Gastrocnemius medialis (tissue), 4 donors: ENCODE measurements at regions of chr10 and their contacts with region 1.

Region 1: GRCh38 chr10:103772096-103772845 is 83.1 kb downstream of the SH3PXD2A start:
- DNase-seq: peak; percentile 76 to 88
- ATAC-seq: peak; percentile 70 to 80
- H3K4me3 ChIP-seq: peak overlapping the region; percentile 31 to 56 (median 54)
- H3K27ac ChIP-seq: peak overlapping the region; percentile 83 to 91 (median 86)
- H3K4me1 ChIP-seq: peaks cover under 1 to 19% of the 10 kb centered on the region in 2 donors
- H3K27me3 ChIP-seq: no peaks in the 10 kb centered on the region
- CTCF ChIP-seq: no peak
- POLR2A ChIP-seq: peak; percentile 53 to 74

Region 2: GRCh38 chr10:102583435-102584417 is 1188.5 kb before region 1 on chr10:
- in situ Hi-C with region 1: no loop called
- intact Hi-C with region 1: no loop called
- DNase-seq: peak; percentile 69 to 80
- ATAC-seq: peak; percentile 91 to 96
- H3K4me3 ChIP-seq: no peak overlapping the region
- H3K27ac ChIP-seq: no peak overlapping the region
- H3K4me1 ChIP-seq: peaks cover 3 to 22% of the 10 kb centered on the region in 2 donors
- H3K27me3 ChIP-seq: no peaks in the 10 kb centered on the region
- CTCF ChIP-seq: peak; percentile 85 to 89 (median 87)
- POLR2A ChIP-seq: no peak

Region 3: GRCh38 chr10:103745341-103746227 is 26.7 kb before region 1 on chr10:
- in situ Hi-C with region 1: no loop called
- intact Hi-C with region 1: loop called (anchors 2 kb)
- DNase-seq: peak in 1 of 2 donors; percentile 48
- ATAC-seq: peak; percentile 98
- H3K4me3 ChIP-seq: no peak overlapping the region
- H3K27ac ChIP-seq: peak overlapping the region; percentile 78 to 87 (median 82)
- H3K4me1 ChIP-seq: peaks cover 22 to 28% of the 10 kb centered on the region in 2 donors
- H3K27me3 ChIP-seq: no peaks in the 10 kb centered on the region
- CTCF ChIP-seq: no peak
- POLR2A ChIP-seq: no peak

Region 4: DNA sequence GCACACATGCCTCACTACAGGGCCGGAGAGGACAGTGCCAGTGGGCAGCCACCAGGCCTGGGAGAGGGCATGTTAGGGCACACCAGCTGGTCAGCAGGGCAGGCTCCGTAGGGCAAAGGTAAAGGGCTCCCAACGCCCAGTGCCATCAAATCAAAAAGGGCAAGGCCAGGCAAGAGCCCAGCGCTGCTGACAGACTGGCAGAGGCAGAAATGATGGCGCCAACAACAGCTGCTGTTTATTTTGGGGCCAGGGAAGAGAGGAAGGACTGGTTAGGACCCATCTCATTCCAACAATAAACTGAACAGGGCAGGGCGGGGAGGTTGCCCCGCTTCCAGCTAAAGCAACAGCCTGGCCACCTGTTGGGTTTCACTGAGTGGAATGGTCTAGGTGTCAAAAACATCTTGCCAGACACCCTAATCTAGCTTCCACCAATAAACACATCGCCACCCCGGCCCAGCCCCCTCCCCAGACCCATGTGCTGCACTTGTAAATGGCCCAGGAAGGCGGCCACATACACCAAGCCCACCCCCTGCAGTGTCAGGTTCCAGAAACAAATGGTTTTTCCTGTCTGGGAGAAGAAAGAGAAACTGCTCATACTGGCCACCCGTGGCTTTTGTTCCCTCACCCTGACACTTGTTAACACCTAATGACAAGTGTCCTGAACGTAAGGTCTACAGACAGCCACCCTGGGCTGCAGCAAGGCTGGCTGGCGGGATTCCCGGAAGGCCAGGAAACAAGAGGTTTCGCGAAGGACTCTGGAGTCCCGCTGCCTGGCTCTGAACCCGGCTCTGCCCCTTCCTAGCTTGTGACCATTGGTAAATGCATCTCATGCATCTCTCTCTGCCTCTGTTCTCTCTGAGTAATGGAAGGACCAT is 67.8 kb after region 1 on chr10:
- in situ Hi-C with region 1: loop called in 1 of 4 experiments (anchors 10 kb)
- intact Hi-C with region 1: loop called (anchors 2 kb)
- DNase-seq: peak; percentile 69 to 92
- ATAC-seq: peak; percentile 49 to 73
- H3K4me3 ChIP-seq: peak overlapping the region in 3 of 4 donors; percentile 32 to 34 (median 33)
- H3K27ac ChIP-seq: peak overlapping the region; percentile 81 to 87 (median 84)
- H3K4me1 ChIP-seq: peaks cover 81 to 87% of the 10 kb centered on the region in 2 donors
- H3K27me3 ChIP-seq: no peaks in the 10 kb centered on the region
- CTCF ChIP-seq: no peak
- POLR2A ChIP-seq: peak in 1 of 2 donors; percentile 22

Region 5: DNA sequence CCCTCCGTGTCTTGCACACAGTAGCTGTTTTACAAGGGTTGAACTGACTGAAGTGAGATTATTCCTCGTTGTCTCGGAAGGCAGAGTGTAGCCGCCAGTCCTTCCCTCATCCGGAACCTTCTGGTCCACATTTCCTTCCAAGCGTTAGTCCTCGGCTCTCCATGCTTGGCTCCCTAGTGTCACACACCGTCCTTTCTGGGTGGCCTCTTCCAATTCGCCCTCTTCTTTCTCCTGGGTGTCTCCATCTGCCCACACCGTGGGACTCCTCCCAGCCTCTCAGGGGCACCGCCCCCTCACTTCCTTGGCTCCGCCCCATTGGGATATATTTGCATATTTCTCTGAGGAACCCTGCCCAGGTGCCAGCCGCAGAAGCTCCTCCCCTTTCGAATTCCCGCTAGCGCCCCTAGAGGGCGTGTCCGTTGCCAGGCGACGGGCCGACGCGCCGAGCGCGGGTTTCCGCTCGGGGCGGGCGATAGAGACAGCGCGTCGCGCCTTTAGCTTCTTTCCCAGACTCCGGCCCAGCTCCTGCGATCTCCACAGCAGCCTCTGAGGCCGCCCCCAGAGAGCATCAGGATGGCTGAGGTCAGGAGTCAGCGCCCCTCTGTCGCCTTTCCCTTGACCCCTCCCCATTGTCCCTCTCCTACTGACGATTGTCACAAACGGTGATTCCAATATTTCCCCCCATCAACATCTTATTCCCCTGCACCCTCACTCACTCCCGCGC is 581.2 kb after region 1 on chr10 and contains the start of gene CFAP58:
- in situ Hi-C with region 1: no loop called
- intact Hi-C with region 1: no loop called
- DNase-seq: peak; percentile 85 to 92
- ATAC-seq: peak; percentile 92
- H3K4me3 ChIP-seq: peak within 1 kb of the TSS; percentile 38 to 60 (median 54)
- H3K27ac ChIP-seq: peak within 1 kb of the TSS in 1 of 4 donors; percentile 20
- H3K4me1 ChIP-seq: peaks cover 11 to 22% of the 10 kb centered on the region in 2 donors
- H3K27me3 ChIP-seq: no peaks in the 10 kb centered on the region
- CTCF ChIP-seq: peak; percentile 71 to 88 (median 81)
- POLR2A ChIP-seq: no peak
- total RNA-seq, gene CFAP58: 0.13 to 0.36 (median 0.27) TPM in 3 of 4 donors, not detected in the other